Activated CD8-positive, alpha-beta T cell treated with anti-CD3 and anti-CD28 coated beads for 36 hours (primary cell): ENCODE measurements at regions of chr9 and their contacts with region 1.

Region 1: DNA sequence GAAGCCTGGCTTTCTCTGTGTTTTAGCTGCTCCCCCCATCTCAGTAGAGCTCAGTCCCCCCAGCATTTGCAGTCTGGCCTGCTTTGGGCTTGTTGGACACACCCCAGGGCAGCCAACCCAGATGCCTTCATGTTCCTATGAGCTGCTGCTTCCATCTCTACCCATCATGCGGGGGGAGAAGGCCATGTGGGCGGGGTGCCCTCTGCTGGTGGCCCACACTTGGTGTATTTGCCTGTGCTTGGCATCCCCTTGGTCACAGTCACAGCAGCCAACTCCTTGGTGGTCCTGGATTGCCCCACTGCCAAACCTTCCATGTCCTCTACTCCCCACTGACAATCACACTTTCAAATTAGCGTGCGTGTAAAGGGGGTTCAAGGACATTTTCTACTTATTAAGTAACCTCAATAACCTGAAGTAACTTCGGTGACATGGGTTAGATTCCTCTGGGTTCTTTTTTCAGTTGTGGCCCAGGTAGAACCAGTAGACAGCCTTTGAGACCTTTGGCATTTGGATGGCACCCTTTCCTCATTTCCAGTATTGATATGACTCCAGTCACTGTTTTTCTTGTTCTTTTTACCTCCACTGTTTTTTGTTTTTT is 42.8 kb downstream of the SNX30 start:
- DNase-seq: peak; percentile 92
- ATAC-seq: peak; percentile 100
- H3K4me3 Mint-ChIP-seq: no peak overlapping the region
- H3K27ac Mint-ChIP-seq: no peak overlapping the region
- H3K4me1 Mint-ChIP-seq: peaks cover 7% of the 10 kb centered on the region
- H3K27me3 Mint-ChIP-seq: no peaks in the 10 kb centered on the region
- CTCF ChIP-seq: peak; percentile 68

Region 2: GRCh38 chr9:112711050-112711689 is 82.1 kb before region 1 on chr9:
- CTCF ChIA-PET with region 1: interaction called, 11 read pairs
- POLR2A ChIA-PET with region 1: interaction called, 4 read pairs
- intact Hi-C with region 1: no loop called
- DNase-seq: no peak
- ATAC-seq: no peak
- H3K4me3 Mint-ChIP-seq: no peak overlapping the region
- H3K27ac Mint-ChIP-seq: no peak overlapping the region
- H3K4me1 Mint-ChIP-seq: peaks cover 46% of the 10 kb centered on the region
- H3K27me3 Mint-ChIP-seq: no peaks in the 10 kb centered on the region
- CTCF ChIP-seq: no peak

Region 3: GRCh38 chr9:112717661-112718341 is 75.5 kb before region 1 on chr9 and contains the start of gene INIP:
- CTCF ChIA-PET with region 1: interaction called, 36 read pairs
- POLR2A ChIA-PET with region 1: interaction called, 4 read pairs
- intact Hi-C with region 1: no loop called
- DNase-seq: peak; percentile 99
- ATAC-seq: peak; percentile 92
- H3K4me3 Mint-ChIP-seq: peak within 1 kb of the TSS; percentile 91
- H3K27ac Mint-ChIP-seq: peak within 1 kb of the TSS; percentile 96
- H3K4me1 Mint-ChIP-seq: peaks cover 32% of the 10 kb centered on the region
- H3K27me3 Mint-ChIP-seq: no peaks in the 10 kb centered on the region
- CTCF ChIP-seq: peak; percentile 14
- total RNA-seq, gene INIP: 28.9 to 31.0 TPM

Region 4: DNA sequence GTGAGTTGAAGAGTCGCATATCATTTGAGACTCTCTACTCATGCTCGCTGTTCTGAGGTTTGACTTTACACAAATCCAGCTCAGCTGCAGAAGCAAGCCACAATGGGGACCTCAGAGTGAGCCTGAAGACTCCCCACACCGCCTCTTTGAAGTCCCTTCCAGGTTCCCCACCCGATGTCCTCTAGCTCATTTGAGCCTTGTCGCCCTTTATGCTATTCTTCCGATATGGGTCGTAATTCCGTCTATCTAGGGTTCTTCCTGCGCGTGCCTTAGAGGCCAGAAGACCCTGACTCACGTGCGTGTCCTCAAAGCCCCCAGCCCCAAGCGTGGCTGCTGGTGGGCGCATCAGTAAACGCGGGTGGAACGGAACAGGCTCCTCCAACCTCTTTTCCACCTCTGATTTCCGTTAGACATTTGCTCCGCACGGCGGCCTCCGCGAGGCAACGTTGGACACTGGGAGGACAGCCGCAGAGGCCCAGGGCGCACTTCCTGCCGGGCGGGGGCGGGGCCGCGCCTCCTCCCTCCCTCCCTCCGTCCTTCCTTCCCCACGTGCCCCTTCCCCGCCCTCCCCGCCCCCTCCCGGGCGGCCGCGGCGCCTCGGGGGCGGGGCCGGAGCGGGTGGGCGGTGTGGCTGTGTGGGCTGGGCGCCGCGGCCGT is 43.1 kb before region 1 on chr9 and contains the start of gene SNX30:
- CTCF ChIA-PET with region 1: interaction called, 8 read pairs
- POLR2A ChIA-PET with region 1: no interaction called
- intact Hi-C with region 1: loop called (anchors 5 kb)
- DNase-seq: peak; percentile 75
- ATAC-seq: peak; percentile 48
- H3K4me3 Mint-ChIP-seq: peak within 1 kb of the TSS; percentile 78
- H3K27ac Mint-ChIP-seq: peak within 1 kb of the TSS; percentile 79
- H3K4me1 Mint-ChIP-seq: peaks cover 66% of the 10 kb centered on the region
- H3K27me3 Mint-ChIP-seq: no peaks in the 10 kb centered on the region
- CTCF ChIP-seq: no peak
- total RNA-seq, gene SNX30: 3.8 to 3.9 TPM

Region 5: DNA sequence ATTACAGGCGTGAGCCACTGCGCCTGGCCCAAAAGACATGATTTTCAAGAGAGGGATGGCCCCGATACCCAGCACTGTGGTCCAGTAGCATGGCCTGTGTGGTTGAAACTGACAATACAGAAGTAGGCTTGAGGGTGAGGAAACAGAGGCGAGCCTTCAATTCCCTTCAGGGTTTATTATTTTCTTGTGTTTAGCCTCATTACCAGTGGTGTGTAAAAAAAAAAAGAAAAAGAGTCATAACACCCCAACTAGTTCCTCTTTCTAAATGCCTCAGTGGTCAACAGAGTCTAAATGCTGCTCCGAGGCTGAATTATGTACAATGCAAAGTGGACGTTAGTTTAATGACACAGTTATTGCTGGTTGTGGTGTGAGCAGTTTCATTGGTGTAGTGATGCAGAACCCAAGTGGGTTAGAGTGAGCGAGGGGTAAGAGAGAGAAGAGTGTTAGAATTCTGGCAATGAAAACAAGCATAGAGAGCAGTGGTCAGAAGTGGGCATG is 16.1 kb after region 1 on chr9:
- CTCF ChIA-PET with region 1: no interaction called
- POLR2A ChIA-PET with region 1: no interaction called
- intact Hi-C with region 1: no loop called
- DNase-seq: no peak
- ATAC-seq: no peak
- H3K4me3 Mint-ChIP-seq: no peak overlapping the region
- H3K27ac Mint-ChIP-seq: no peak overlapping the region
- H3K4me1 Mint-ChIP-seq: peaks cover under 1% of the 10 kb centered on the region
- H3K27me3 Mint-ChIP-seq: no peaks in the 10 kb centered on the region
- CTCF ChIP-seq: no peak